CD4-positive, alpha-beta T cell (primary cell): ENCODE measurements at regions of chr1 and their contacts with region 1.

Region 1: DNA sequence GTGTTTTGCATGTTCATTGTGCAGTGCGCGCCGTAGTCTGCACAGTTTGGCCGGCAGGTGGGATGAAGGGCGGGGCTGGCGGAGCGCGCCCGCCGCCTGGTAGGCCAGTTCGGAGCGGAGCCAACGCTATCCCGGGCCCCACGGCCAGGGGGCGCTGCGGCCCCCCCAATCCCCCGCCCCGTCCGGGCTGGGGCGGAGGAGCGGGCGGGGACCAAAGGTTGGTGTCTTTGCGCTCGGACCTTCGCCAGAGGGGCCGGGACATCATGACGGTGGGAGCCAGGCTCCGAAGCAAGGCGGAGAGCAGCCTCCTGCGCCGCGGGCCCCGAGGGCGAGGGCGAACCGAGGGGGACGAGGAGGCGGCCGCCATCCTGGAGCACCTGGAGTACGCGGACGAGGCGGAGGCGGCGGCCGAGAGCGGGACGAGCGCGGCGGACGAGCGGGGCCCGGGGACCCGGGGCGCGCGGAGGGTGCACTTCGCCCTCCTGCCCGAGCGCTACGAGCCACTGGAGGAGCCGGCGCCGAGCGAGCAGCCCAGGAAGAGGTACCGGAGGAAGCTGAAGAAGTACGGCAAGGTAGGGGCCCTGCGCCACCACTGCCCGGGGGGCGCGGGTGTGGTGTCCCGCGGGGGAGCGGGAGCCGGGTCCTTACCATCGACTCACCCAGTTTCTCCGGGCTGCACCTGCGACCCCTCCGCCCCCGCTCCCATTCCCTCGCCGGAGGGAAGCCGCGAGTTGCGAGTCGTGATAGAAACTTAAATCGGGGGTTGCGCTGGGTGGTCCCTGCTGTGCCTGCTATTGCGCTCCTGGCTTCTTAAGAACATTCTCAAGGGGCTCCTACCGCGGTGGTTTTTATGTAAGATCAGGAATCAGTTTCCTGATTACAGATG is at the start of gene C1orf115:
- DNase-seq: peak; percentile 34 to 84 (median 68)
- ATAC-seq: peak; percentile 97
- H3K4me3 ChIP-seq: peak within 1 kb of the TSS; percentile 56
- H3K4me3 Mint-ChIP-seq: peak within 1 kb of the TSS; percentile 87
- H3K27ac ChIP-seq: no peak within 1 kb of the TSS
- H3K27ac Mint-ChIP-seq: no peak within 1 kb of the TSS
- H3K4me1 ChIP-seq: peaks cover 12% of the 10 kb centered on the region
- H3K4me1 Mint-ChIP-seq: peaks cover 10% of the 10 kb centered on the region
- H3K27me3 ChIP-seq: peaks cover 0 to 10% of the 10 kb centered on the region in 2 experiments
- H3K27me3 Mint-ChIP-seq: peaks cover 31% of the 10 kb centered on the region
- CTCF ChIP-seq: peak; percentile 80
- total RNA-seq, gene C1orf115: 0.73 to 0.82 TPM

Region 2: GRCh38 chr1:220642277-220642676 is 48.1 kb before region 1 on chr1:
- CTCF ChIA-PET with region 1: no interaction called
- POLR2A ChIA-PET with region 1: no interaction called
- intact Hi-C with region 1: no loop called
- DNase-seq: no peak
- ATAC-seq: no peak
- H3K4me3 ChIP-seq: no peak overlapping the region
- H3K4me3 Mint-ChIP-seq: no peak overlapping the region
- H3K27ac ChIP-seq: no peak overlapping the region
- H3K27ac Mint-ChIP-seq: no peak overlapping the region
- H3K4me1 ChIP-seq: no peaks in the 10 kb centered on the region
- H3K4me1 Mint-ChIP-seq: no peaks in the 10 kb centered on the region
- H3K27me3 ChIP-seq: peaks cover 0 to 8% of the 10 kb centered on the region in 2 experiments
- H3K27me3 Mint-ChIP-seq: peaks cover 16% of the 10 kb centered on the region
- CTCF ChIP-seq: no peak

Region 3: DNA sequence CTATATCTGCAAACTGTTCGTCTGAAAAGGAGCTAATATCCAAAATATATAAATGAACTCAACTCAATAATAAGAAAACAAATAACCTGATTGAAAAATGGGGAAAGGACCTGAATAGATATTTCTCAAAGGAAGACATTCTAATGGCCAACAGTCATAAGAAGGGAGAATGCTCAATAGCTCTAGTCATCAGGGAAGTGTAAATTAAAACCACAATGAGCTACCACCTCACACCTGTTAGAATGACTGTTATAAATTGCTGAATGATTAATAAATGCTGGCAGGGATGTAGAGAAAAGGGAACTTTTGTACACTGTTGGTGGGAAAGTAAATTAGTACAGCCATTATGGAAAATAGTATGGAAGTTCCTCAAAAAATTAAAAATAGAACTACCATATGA is 21.4 kb before region 1 on chr1:
- CTCF ChIA-PET with region 1: no interaction called
- POLR2A ChIA-PET with region 1: no interaction called
- intact Hi-C with region 1: no loop called
- DNase-seq: no peak
- ATAC-seq: no peak
- H3K4me3 ChIP-seq: no peak overlapping the region
- H3K4me3 Mint-ChIP-seq: no peak overlapping the region
- H3K27ac ChIP-seq: no peak overlapping the region
- H3K27ac Mint-ChIP-seq: no peak overlapping the region
- H3K4me1 ChIP-seq: no peaks in the 10 kb centered on the region
- H3K4me1 Mint-ChIP-seq: no peaks in the 10 kb centered on the region
- H3K27me3 ChIP-seq: peaks cover 0 to 9% of the 10 kb centered on the region in 2 experiments
- H3K27me3 Mint-ChIP-seq: peaks cover 18% of the 10 kb centered on the region
- CTCF ChIP-seq: no peak

Region 4: GRCh38 chr1:220776720-220777326 is 86.4 kb after region 1 on chr1:
- CTCF ChIA-PET with region 1: no interaction called
- POLR2A ChIA-PET with region 1: no interaction called
- intact Hi-C with region 1: loop called in 1 of 2 experiments (anchors 5 kb)
- DNase-seq: peak; percentile 40 to 73 (median 49)
- ATAC-seq: peak; percentile 52
- H3K4me3 ChIP-seq: no peak overlapping the region
- H3K4me3 Mint-ChIP-seq: no peak overlapping the region
- H3K27ac ChIP-seq: no peak overlapping the region
- H3K27ac Mint-ChIP-seq: no peak overlapping the region
- H3K4me1 ChIP-seq: peaks cover 4% of the 10 kb centered on the region
- H3K4me1 Mint-ChIP-seq: no peaks in the 10 kb centered on the region
- H3K27me3 ChIP-seq: peaks cover 0 to 5% of the 10 kb centered on the region in 2 experiments
- H3K27me3 Mint-ChIP-seq: peaks cover 36% of the 10 kb centered on the region
- CTCF ChIP-seq: peak; percentile 66

Region 5: DNA sequence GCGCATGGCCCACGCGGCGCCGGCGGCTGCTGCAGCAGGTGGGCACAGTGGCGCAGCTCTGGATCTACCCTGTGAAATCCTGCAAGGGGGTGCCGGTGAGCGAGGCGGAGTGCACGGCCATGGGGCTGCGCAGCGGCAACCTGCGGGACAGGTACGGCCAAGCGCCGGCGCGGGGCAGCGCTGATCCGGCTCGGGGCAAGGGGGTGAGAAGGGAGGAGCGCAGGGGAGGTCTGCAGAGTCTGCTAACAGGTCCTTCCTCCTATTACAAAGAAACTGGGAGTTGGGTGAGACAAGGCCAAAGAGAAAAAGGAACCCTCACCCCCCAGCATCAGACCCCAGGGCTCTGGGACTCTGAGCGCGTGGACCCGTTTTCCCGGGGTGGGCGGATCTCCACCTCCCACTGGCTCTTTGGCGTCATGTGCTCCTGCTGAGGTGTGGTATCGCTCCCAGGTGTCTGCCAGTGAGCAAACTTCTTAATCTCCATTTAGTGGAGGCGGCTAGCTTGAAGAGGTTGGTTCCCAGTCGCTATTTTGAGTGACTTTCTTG is 96.8 kb after region 1 on chr1:
- CTCF ChIA-PET with region 1: no interaction called
- POLR2A ChIA-PET with region 1: no interaction called
- intact Hi-C with region 1: no loop called
- DNase-seq: no peak
- ATAC-seq: no peak
- H3K4me3 ChIP-seq: no peak overlapping the region
- H3K4me3 Mint-ChIP-seq: no peak overlapping the region
- H3K27ac ChIP-seq: no peak overlapping the region
- H3K27ac Mint-ChIP-seq: no peak overlapping the region
- H3K4me1 ChIP-seq: peaks cover 6% of the 10 kb centered on the region
- H3K4me1 Mint-ChIP-seq: no peaks in the 10 kb centered on the region
- H3K27me3 ChIP-seq: peaks cover 31 to 40% of the 10 kb centered on the region in 2 experiments
- H3K27me3 Mint-ChIP-seq: peaks cover 46% of the 10 kb centered on the region
- CTCF ChIP-seq: no peak